Right lobe of liver (tissue), 6 donors: ENCODE measurements at regions of chr5 and their contacts with region 1.

Region 1: GRCh38 chr5:151040211-151040747 is 19.9 kb downstream of the GPX3 start:
- DNase-seq: peak; percentile 76 to 87 (median 76)
- ATAC-seq: peak; percentile 69 to 86 (median 79)
- H3K4me3 ChIP-seq: no peak overlapping the region
- H3K27ac ChIP-seq: peak overlapping the region; percentile 77 to 86 (median 77)
- H3K4me1 ChIP-seq: peaks cover 0 to 61% (median 33%) of the 10 kb centered on the region in 4 donors
- H3K27me3 ChIP-seq: no peaks in the 10 kb centered on the region
- CTCF ChIP-seq: peak; percentile 27 to 45 (median 38)
- POLR2A ChIP-seq: no peak

Region 2: GRCh38 chr5:150931368-150931965 is 108.8 kb before region 1 on chr5:
- intact Hi-C with region 1: no loop called
- DNase-seq: no peak
- ATAC-seq: no peak
- H3K4me3 ChIP-seq: no peak overlapping the region
- H3K27ac ChIP-seq: no peak overlapping the region
- H3K4me1 ChIP-seq: no peaks in the 10 kb centered on the region
- H3K27me3 ChIP-seq: no peaks in the 10 kb centered on the region
- CTCF ChIP-seq: no peak
- POLR2A ChIP-seq: no peak

Region 3: DNA sequence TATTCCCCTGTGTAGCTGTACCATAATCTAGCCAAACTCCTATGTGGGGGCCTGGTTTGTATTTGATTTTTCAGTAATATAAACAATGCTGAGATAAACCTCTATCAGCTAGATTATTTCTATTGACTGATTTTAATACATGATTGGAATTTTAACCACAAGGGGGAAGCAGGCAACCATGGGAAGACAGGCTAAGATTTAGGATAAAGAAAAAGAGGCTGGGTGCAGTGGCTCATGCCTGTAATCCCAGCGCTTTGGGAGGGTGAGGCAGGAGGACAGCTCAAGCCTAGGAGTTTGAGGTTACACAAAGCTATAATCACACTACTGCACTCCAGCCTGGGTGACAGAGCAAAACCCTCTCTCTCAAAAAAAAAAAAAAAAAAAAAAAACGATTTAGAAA is 38.0 kb before region 1 on chr5:
- intact Hi-C with region 1: loop called (anchors 5 kb)
- DNase-seq: no peak
- ATAC-seq: peak; percentile 32 to 50 (median 44)
- H3K4me3 ChIP-seq: no peak overlapping the region
- H3K27ac ChIP-seq: no peak overlapping the region
- H3K4me1 ChIP-seq: peaks cover 0 to 58% (median 26%) of the 10 kb centered on the region in 4 donors
- H3K27me3 ChIP-seq: no peaks in the 10 kb centered on the region
- CTCF ChIP-seq: peak; percentile 51 to 86 (median 64)
- POLR2A ChIP-seq: no peak

Region 4: GRCh38 chr5:151239237-151239861 is 199.1 kb after region 1 on chr5:
- intact Hi-C with region 1: no loop called
- DNase-seq: peak; percentile 73 to 81 (median 79)
- ATAC-seq: peak; percentile 71 to 91 (median 86)
- H3K4me3 ChIP-seq: no peak overlapping the region
- H3K27ac ChIP-seq: no peak overlapping the region
- H3K4me1 ChIP-seq: peaks cover 0 to 9% (median 3%) of the 10 kb centered on the region in 4 donors
- H3K27me3 ChIP-seq: no peaks in the 10 kb centered on the region
- CTCF ChIP-seq: peak; percentile 72 to 94 (median 88)
- POLR2A ChIP-seq: no peak